B cell (primary cell): ENCODE measurements at regions of chr10 and their contacts with region 1.

Region 1: DNA sequence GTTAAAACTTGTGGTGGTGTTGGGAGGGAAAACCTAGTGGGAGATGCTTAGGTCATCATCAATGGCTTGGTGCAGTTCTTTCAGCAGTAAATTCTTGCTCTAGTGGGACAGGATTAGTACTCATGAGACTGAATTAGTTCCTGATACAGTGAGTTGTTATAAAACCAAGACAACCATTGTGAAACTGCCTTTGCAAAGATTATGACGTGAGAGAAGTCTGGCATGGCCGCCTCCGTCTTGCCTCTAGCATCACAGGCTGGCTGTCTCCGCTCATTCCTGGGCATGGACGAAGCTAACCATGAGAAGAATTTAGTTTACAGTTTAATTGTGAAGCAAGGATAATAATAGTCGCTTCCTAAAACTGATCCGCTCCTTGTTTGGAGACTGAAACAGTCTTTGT is 186.4 kb downstream of the KIF20B start:
- DNase-seq: peak; percentile 83
- ATAC-seq: peak; percentile 73
- H3K4me3 ChIP-seq: peak overlapping the region in 3 of 5 experiments; percentile 6 to 36 (median 33)
- H3K4me3 Mint-ChIP-seq: peak overlapping the region; percentile 82
- H3K27ac ChIP-seq: peak overlapping the region; percentile 94 to 97
- H3K27ac Mint-ChIP-seq: peak overlapping the region; percentile 95
- H3K4me1 ChIP-seq: peaks cover 49 to 52% of the 10 kb centered on the region in 2 donors
- H3K4me1 Mint-ChIP-seq: peaks cover 55% of the 10 kb centered on the region
- H3K27me3 ChIP-seq: no peaks in the 10 kb centered on the region
- H3K27me3 Mint-ChIP-seq: no peaks in the 10 kb centered on the region
- CTCF ChIP-seq: no peak

Region 2: GRCh38 chr10:89251409-89252224 is 636.2 kb before region 1 on chr10 and contains the start of gene LIPA:
- CTCF ChIA-PET with region 1: no interaction called
- POLR2A ChIA-PET with region 1: no interaction called
- intact Hi-C with region 1: loop called (anchors 5 kb)
- DNase-seq: peak; percentile 99
- ATAC-seq: peak; percentile 95
- H3K4me3 ChIP-seq: peak within 1 kb of the TSS; percentile 65 to 92 (median 84)
- H3K4me3 Mint-ChIP-seq: peak within 1 kb of the TSS; percentile 94
- H3K27ac ChIP-seq: peak within 1 kb of the TSS; percentile 48 to 71
- H3K27ac Mint-ChIP-seq: peak within 1 kb of the TSS; percentile 85
- H3K4me1 ChIP-seq: peaks cover 18% of the 10 kb centered on the region in 2 donors
- H3K4me1 Mint-ChIP-seq: peaks cover 24% of the 10 kb centered on the region
- H3K27me3 ChIP-seq: no peaks in the 10 kb centered on the region
- H3K27me3 Mint-ChIP-seq: no peaks in the 10 kb centered on the region
- CTCF ChIP-seq: no peak
- total RNA-seq, gene LIPA: 36.5 and 38.9 TPM in 2 replicates

Region 3: GRCh38 chr10:89873055-89873454 is 14.8 kb before region 1 on chr10:
- CTCF ChIA-PET with region 1: interaction called, 5 read pairs
- POLR2A ChIA-PET with region 1: interaction called, 4 read pairs
- intact Hi-C with region 1: loop called (anchors 2 kb)
- DNase-seq: peak; percentile 67
- ATAC-seq: peak; percentile 73
- H3K4me3 ChIP-seq: no peak overlapping the region
- H3K4me3 Mint-ChIP-seq: peak overlapping the region; percentile 48
- H3K27ac ChIP-seq: no peak overlapping the region
- H3K27ac Mint-ChIP-seq: peak overlapping the region; percentile 1
- H3K4me1 ChIP-seq: peaks cover 17% of the 10 kb centered on the region in 2 donors
- H3K4me1 Mint-ChIP-seq: peaks cover 22% of the 10 kb centered on the region
- H3K27me3 ChIP-seq: no peaks in the 10 kb centered on the region
- H3K27me3 Mint-ChIP-seq: peaks cover 6% of the 10 kb centered on the region
- CTCF ChIP-seq: no peak

Region 4: DNA sequence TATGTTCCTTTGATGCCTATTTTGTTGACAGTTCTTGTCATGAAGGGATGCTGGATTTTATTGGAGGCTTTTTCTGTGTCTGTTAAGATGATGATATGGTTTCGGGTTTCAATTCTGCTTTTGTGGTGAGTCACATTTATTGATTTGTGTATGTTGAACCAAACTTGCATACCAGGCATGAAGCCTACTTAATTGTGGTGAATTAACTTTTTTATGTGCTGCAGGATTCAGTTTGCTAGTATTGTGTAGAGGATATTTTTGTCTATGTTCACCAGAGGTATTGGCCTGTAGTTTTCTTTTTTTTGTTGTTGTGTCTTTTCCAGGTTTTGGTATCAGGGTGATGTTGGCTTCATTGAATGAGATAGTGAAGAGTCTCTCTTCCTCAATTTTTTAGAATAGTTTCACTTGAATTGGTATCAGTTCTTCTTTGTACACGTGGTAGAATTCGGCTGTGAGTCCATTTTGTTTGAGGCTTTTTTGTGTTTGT is 159.5 kb after region 1 on chr10:
- CTCF ChIA-PET with region 1: no interaction called
- POLR2A ChIA-PET with region 1: no interaction called
- intact Hi-C with region 1: loop called (anchors 5 kb)
- DNase-seq: peak; percentile 82
- ATAC-seq: peak; percentile 79
- H3K4me3 ChIP-seq: no peak overlapping the region
- H3K4me3 Mint-ChIP-seq: peak overlapping the region; percentile 49
- H3K27ac ChIP-seq: peak overlapping the region; percentile 30 to 31
- H3K27ac Mint-ChIP-seq: peak overlapping the region; percentile 80
- H3K4me1 ChIP-seq: peaks cover 26 to 36% of the 10 kb centered on the region in 2 donors
- H3K4me1 Mint-ChIP-seq: peaks cover 44% of the 10 kb centered on the region
- H3K27me3 ChIP-seq: peaks cover 0 to 9% (median 2%) of the 10 kb centered on the region in 4 experiments
- H3K27me3 Mint-ChIP-seq: no peaks in the 10 kb centered on the region
- CTCF ChIP-seq: no peak